CD8-positive, alpha-beta T cell (primary cell): ENCODE measurements at regions of chr16 and their contacts with region 1.

Region 1: GRCh38 chr16:53054670-53055485 is at the start of gene CHD9:
- DNase-seq: peak; percentile 53 to 89 (median 72)
- ATAC-seq: peak; percentile 91
- H3K4me3 ChIP-seq: peak within 1 kb of the TSS; percentile 78 to 86
- H3K4me3 Mint-ChIP-seq: peak within 1 kb of the TSS; percentile 87
- H3K27ac ChIP-seq: peak within 1 kb of the TSS; percentile 37 to 61
- H3K27ac Mint-ChIP-seq: peak within 1 kb of the TSS; percentile 77
- H3K4me1 ChIP-seq: peaks cover 18% of the 10 kb centered on the region
- H3K4me1 Mint-ChIP-seq: peaks cover 30% of the 10 kb centered on the region
- H3K27me3 ChIP-seq: no peaks in the 10 kb centered on the region
- H3K27me3 Mint-ChIP-seq: no peaks in the 10 kb centered on the region
- CTCF ChIP-seq: peak; percentile 97
- total RNA-seq, gene CHD9: 23.2 to 23.5 TPM

Region 2: DNA sequence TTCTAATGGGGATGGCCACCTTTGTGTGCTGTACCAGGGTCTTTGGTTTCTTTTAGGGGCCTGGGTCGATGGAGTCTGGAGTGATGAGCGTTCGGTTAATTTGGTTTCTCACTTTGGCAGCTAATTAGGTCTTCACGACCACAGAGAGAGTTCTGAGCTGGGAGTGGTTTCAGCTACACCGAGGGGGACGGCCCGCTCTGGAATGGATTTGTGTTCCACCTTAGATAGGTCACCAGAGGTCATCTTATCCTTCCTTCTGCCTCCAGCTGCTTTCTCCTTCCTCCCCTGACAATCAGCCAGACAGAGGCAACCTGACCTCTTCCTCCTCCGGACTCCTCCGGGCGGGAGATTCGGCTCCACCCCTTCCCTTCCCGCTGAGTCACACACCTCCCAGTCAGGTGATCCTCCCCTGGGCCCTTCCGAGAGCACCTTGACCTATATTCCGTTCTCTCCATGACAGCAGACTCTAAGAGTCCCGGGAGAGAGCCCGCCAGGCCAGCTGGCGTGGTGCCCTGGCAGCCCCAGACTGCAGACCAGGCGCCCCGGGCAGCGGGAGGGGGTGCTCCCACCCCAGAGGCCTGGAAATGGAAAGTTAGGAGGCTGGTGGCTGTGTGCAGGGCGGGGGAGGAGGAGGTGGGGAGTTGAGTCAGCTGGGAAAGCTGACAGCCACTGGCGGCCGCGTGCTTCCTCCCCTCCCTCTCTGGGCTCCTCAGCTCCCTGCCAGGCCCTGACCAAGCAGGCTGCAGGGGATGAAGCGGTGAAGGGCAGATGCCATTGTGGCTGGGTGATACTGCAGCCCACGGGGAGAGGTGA is 44.6 kb after region 1 on chr16:
- CTCF ChIA-PET with region 1: interaction called, 23 read pairs
- POLR2A ChIA-PET with region 1: interaction called, 3 read pairs
- intact Hi-C with region 1: no loop called
- DNase-seq: peak; percentile 1 to 80 (median 58)
- ATAC-seq: peak; percentile 65
- H3K4me3 ChIP-seq: peak overlapping the region; percentile 40 to 64
- H3K4me3 Mint-ChIP-seq: peak overlapping the region; percentile 78
- H3K27ac ChIP-seq: peak overlapping the region; percentile 45 to 63
- H3K27ac Mint-ChIP-seq: peak overlapping the region; percentile 91
- H3K4me1 ChIP-seq: peaks cover 21% of the 10 kb centered on the region
- H3K4me1 Mint-ChIP-seq: peaks cover 26% of the 10 kb centered on the region
- H3K27me3 ChIP-seq: no peaks in the 10 kb centered on the region
- H3K27me3 Mint-ChIP-seq: no peaks in the 10 kb centered on the region
- CTCF ChIP-seq: no peak

Region 3: GRCh38 chr16:53154513-53154912 is 99.6 kb after region 1 on chr16:
- CTCF ChIA-PET with region 1: interaction called, 103 read pairs
- POLR2A ChIA-PET with region 1: interaction called, 5 read pairs
- intact Hi-C with region 1: no loop called
- DNase-seq: no peak
- ATAC-seq: no peak
- H3K4me3 ChIP-seq: no peak overlapping the region
- H3K4me3 Mint-ChIP-seq: no peak overlapping the region
- H3K27ac ChIP-seq: no peak overlapping the region
- H3K27ac Mint-ChIP-seq: no peak overlapping the region
- H3K4me1 ChIP-seq: no peaks in the 10 kb centered on the region
- H3K4me1 Mint-ChIP-seq: peaks cover 2% of the 10 kb centered on the region
- H3K27me3 ChIP-seq: no peaks in the 10 kb centered on the region
- H3K27me3 Mint-ChIP-seq: no peaks in the 10 kb centered on the region
- CTCF ChIP-seq: no peak

Region 4: DNA sequence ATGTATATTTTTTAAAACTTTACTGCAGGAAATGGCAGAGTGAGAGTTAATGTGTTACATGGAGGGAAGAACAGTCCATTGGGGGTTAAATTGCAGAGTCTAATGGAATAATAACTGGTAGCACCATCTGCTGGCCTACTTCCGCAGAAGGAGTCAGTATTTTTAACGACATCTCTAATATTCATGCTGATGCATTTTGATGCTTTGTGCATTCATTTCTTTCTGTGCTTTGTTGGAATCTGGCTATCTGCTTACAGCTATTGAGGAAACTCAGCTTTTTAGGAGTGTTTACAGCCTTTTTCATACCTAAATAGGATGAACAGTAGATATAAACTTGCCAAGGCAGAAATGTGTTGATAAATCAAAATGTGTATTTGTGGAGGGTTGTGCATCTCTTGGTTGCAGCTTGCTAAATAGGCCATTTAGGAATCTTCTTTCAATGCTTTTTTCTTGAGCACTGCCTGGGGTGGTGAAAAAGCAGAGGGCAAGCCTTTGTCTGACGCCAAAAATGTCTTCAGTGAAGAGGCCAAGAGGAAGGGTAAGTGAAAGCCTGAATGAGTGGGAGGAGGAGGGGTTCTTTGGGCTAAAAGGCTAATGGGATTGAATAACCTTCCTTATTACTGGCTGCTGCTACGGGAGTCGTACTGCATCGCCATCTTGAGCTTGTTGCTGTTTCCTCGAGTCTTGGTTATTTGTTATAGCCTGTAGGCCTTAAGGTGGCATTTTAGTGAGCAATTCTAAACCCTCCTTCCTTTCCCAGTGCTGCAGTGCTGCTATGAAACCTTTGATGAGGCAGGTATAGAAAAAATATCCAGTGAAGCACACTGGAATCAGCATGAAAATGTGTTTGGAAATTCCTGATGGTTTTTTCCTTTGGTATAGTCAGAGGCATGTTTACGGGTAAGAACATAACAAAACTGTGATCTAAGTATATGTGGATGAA is 153.2 kb after region 1 on chr16:
- CTCF ChIA-PET with region 1: interaction called, 22 read pairs
- POLR2A ChIA-PET with region 1: interaction called, 5 read pairs
- intact Hi-C with region 1: loop called (anchors 1 to 2 kb)
- DNase-seq: peak in 3 of 9 experiments; percentile 11 to 57 (median 34)
- ATAC-seq: peak; percentile 54
- H3K4me3 ChIP-seq: peak overlapping the region; percentile 5 to 18
- H3K4me3 Mint-ChIP-seq: peak overlapping the region; percentile 55
- H3K27ac ChIP-seq: peak overlapping the region in 1 of 2 experiments; percentile 49
- H3K27ac Mint-ChIP-seq: peak overlapping the region; percentile 75
- H3K4me1 ChIP-seq: peaks cover 11% of the 10 kb centered on the region
- H3K4me1 Mint-ChIP-seq: peaks cover 27% of the 10 kb centered on the region
- H3K27me3 ChIP-seq: no peaks in the 10 kb centered on the region
- H3K27me3 Mint-ChIP-seq: no peaks in the 10 kb centered on the region
- CTCF ChIP-seq: no peak

Region 5: GRCh38 chr16:53457670-53458069 is 402.8 kb after region 1 on chr16:
- CTCF ChIA-PET with region 1: no interaction called
- POLR2A ChIA-PET with region 1: no interaction called
- intact Hi-C with region 1: loop called in 1 of 2 experiments (anchors 10 kb)
- DNase-seq: peak; percentile 46 to 96 (median 76)
- ATAC-seq: peak; percentile 70
- H3K4me3 ChIP-seq: peak overlapping the region; percentile 42 to 49
- H3K4me3 Mint-ChIP-seq: peak overlapping the region; percentile 76
- H3K27ac ChIP-seq: peak overlapping the region; percentile 65 to 72
- H3K27ac Mint-ChIP-seq: peak overlapping the region; percentile 94
- H3K4me1 ChIP-seq: peaks cover 90% of the 10 kb centered on the region
- H3K4me1 Mint-ChIP-seq: peaks cover 92% of the 10 kb centered on the region
- H3K27me3 ChIP-seq: no peaks in the 10 kb centered on the region
- H3K27me3 Mint-ChIP-seq: no peaks in the 10 kb centered on the region
- CTCF ChIP-seq: no peak